Activated naive CD4-positive, alpha-beta T cell treated with anti-CD3 and anti-CD28 coated beads, Interleukin-2, amount 10 ng/mL, durations not matched to agents 7 days and 5 days (primary cell): ENCODE measurements at regions of chr2 and their contacts with region 1.

Region 1: GRCh38 chr2:10408649-10409579 is 39.2 kb downstream of the ODC1 start:
- DNase-seq: peak; percentile 88
- H3K4me3 Mint-ChIP-seq: peak overlapping the region; percentile 56
- H3K27ac Mint-ChIP-seq: peak overlapping the region; percentile 92
- H3K4me1 Mint-ChIP-seq: peaks cover 42% of the 10 kb centered on the region
- H3K27me3 Mint-ChIP-seq: no peaks in the 10 kb centered on the region

Region 2: DNA sequence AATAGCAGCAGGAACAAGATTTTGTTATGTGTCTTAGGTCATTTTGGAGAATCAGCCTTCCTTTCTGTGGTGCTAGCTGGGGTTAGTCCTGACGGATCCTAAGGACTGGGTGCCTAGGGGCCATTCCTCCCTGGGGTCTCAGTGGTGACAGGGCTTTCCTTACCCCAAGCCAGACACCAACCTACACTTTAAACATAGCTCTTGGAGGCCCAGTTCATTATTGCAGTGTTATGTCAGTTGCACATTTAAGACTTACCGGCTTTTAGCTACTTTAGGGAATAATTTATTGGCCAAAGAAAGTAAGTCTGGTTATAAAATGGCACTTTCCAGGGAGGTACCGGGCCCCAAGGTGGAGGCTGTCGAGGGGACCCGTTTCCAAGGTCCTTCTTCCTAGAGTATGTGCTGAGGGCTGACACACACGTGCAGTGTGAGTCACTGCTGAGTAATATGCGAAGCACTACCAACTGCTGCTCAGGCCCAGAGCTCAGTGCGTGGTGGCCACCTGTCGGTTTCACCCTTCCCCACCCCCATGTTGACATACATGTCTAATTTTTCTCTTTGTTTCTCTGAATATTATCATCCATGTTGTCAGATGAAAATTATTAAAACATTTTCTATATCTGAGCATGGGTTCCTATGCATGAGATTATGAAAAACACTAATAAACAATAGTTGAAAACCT is 494.4 kb before region 1 on chr2:
- CTCF ChIA-PET with region 1: no interaction called
- DNase-seq: peak; percentile 24
- H3K4me3 Mint-ChIP-seq: no peak overlapping the region
- H3K27ac Mint-ChIP-seq: no peak overlapping the region
- H3K4me1 Mint-ChIP-seq: peaks cover 6% of the 10 kb centered on the region
- H3K27me3 Mint-ChIP-seq: no peaks in the 10 kb centered on the region

Region 3: DNA sequence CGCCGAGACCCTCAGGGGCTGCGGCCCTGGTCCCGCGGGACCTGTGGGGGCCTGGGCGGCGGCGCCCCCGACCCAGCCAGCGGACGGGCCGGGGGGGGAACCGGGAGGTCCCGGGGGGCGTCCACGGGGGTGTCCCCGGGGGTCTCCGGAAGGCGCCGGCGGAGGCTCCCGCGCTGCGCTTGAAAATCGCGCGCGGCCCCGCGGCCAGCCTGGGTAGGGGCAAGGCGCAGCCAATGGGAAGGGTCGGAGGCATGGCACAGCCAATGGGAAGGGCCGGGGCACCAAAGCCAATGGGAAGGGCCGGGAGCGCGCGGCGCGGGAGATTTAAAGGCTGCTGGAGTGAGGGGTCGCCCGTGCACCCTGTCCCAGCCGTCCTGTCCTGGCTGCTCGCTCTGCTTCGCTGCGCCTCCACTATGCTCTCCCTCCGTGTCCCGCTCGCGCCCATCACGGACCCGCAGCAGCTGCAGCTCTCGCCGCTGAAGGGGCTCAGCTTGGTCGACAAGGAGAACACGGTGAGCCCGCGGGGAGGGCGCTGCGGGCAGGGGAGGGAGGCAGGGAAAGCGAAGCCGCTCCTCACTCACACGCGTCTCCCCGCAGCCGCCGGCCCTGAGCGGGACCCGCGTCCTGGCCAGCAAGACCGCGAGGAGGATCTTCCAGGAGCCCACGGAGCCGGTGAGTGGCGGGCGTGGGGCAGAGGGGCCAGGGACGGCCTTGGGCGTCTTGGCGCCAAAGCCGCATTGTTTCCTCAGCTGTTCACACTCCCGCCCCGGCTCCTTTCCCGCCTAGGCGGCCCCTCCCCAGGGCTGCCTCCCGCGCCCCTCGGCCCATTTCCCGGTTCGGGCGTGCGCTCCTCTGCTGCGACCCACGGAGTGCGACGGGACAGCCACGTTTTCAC is 286.3 kb before region 1 on chr2 and contains the start of gene RRM2:
- CTCF ChIA-PET with region 1: interaction called, 47 read pairs
- DNase-seq: peak; percentile 96
- H3K4me3 Mint-ChIP-seq: peak within 1 kb of the TSS; percentile 95
- H3K27ac Mint-ChIP-seq: peak within 1 kb of the TSS; percentile 98
- H3K4me1 Mint-ChIP-seq: peaks cover 75% of the 10 kb centered on the region
- H3K27me3 Mint-ChIP-seq: no peaks in the 10 kb centered on the region

Region 4: GRCh38 chr2:10161206-10161931 is 247.5 kb before region 1 on chr2:
- CTCF ChIA-PET with region 1: interaction called, 35 read pairs
- DNase-seq: no peak
- H3K4me3 Mint-ChIP-seq: no peak overlapping the region
- H3K27ac Mint-ChIP-seq: peak overlapping the region; percentile 53
- H3K4me1 Mint-ChIP-seq: peaks cover 26% of the 10 kb centered on the region
- H3K27me3 Mint-ChIP-seq: no peaks in the 10 kb centered on the region

Region 5: DNA sequence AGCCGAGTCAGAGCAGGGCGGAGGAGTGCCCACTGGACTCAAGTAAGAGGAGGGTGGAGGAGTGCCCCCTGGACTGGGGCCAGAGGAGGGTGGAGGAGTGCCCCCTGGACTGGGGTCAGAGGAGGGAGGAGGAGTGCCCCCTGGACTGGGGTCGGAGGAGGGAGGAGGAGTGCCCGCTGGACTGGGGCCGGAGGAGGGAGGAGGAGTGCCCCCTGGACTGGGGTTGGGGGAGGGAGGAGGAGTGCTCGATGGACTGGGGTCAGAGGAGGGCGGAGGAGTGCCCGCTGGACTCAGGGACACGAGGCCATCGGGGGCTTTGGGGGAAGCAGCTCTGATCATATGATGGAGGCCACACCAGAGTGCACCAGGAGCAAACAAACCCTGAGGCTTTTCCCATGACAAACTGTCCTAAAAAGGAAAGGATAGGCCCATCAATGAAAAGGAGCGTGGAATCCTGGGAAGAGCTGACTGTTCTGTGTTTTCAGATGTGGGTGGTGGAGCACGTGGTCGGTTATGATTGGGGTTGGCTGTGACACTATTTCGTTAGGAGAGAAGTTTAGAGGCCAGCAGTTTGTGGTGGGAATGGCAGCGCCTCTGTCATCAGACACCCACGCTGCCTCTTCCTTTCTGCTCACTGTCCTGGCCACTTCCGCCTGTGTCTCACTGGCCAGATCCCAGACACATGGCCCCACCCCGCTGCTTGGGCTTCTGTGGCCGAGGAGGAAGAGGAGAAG is 130.7 kb before region 1 on chr2:
- CTCF ChIA-PET with region 1: interaction called, 10 read pairs
- DNase-seq: no peak
- H3K4me3 Mint-ChIP-seq: no peak overlapping the region
- H3K27ac Mint-ChIP-seq: no peak overlapping the region
- H3K4me1 Mint-ChIP-seq: peaks cover 10% of the 10 kb centered on the region
- H3K27me3 Mint-ChIP-seq: peaks cover 61% of the 10 kb centered on the region

Region 6: GRCh38 chr2:10331027-10331701 is 77.8 kb before region 1 on chr2:
- CTCF ChIA-PET with region 1: interaction called, 40 read pairs
- DNase-seq: peak; percentile 85
- H3K4me3 Mint-ChIP-seq: peak overlapping the region; percentile 85
- H3K27ac Mint-ChIP-seq: peak overlapping the region; percentile 93
- H3K4me1 Mint-ChIP-seq: peaks cover 76% of the 10 kb centered on the region
- H3K27me3 Mint-ChIP-seq: peaks cover 6% of the 10 kb centered on the region

Region 7: GRCh38 chr2:10424051-10424450 is 15.1 kb after region 1 on chr2:
- CTCF ChIA-PET with region 1: interaction called, 12 read pairs
- DNase-seq: no peak
- H3K4me3 Mint-ChIP-seq: no peak overlapping the region
- H3K27ac Mint-ChIP-seq: no peak overlapping the region
- H3K4me1 Mint-ChIP-seq: no peaks in the 10 kb centered on the region
- H3K27me3 Mint-ChIP-seq: no peaks in the 10 kb centered on the region

Region 8: GRCh38 chr2:10500601-10501361 is 91.9 kb after region 1 on chr2:
- CTCF ChIA-PET with region 1: no interaction called
- DNase-seq: no peak
- H3K4me3 Mint-ChIP-seq: no peak overlapping the region
- H3K27ac Mint-ChIP-seq: no peak overlapping the region
- H3K4me1 Mint-ChIP-seq: no peaks in the 10 kb centered on the region
- H3K27me3 Mint-ChIP-seq: peaks cover 67% of the 10 kb centered on the region